ENCODE measurements at regions of chr1 and their contacts with region 1.

Region 1: DNA sequence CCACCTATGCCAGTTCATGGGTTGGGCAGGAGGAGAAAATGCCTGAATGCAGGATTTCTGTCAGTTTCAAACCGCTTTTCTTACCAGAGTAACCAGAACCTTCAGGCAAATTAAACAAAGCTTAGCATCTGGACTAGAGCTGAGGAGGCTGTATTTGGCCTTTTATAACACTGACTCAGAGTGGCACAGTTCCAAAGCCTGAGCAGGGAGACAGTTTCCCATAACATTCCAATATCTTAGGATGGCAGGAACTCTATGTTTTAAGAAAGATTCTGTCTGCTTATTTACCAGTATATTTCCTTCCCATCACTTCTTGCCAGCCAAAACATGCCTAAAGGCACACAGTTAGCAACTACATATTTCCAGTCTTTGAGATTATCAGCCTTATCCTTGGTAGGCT is 46.8 kb downstream of the UBR4 start:
- DNase-seq: no peak
- H3K4me3 ChIP-seq: no peak overlapping the region
- H3K27ac ChIP-seq: no peak overlapping the region
- H3K4me1 ChIP-seq: no peaks in the 10 kb centered on the region
- H3K27me3 ChIP-seq: no peaks in the 10 kb centered on the region
- CTCF ChIP-seq: no peak
- EP300 ChIP-seq: no peak
- POLR2A ChIP-seq: no peak
- RAD21 ChIP-seq: no peak

Region 2: GRCh38 chr1:19179597-19180264 is 16.5 kb after region 1 on chr1:
- CTCF ChIA-PET with region 1: interaction called, 12 read pairs
- POLR2A ChIA-PET with region 1: interaction called, 5 read pairs
- DNase-seq: no peak
- H3K4me3 ChIP-seq: no peak overlapping the region
- H3K27ac ChIP-seq: no peak overlapping the region
- H3K4me1 ChIP-seq: no peaks in the 10 kb centered on the region
- H3K27me3 ChIP-seq: no peaks in the 10 kb centered on the region
- CTCF ChIP-seq: peak in 2 of 3 experiments; percentile 6 to 27; a peak in 2 of 4 replicates
- EP300 ChIP-seq: no peak
- POLR2A ChIP-seq: no peak
- RAD21 ChIP-seq: no peak

Measured in H1 (cell line).